ENCODE measurements at regions of chr1 and their contacts with region 1.

Region 1: DNA sequence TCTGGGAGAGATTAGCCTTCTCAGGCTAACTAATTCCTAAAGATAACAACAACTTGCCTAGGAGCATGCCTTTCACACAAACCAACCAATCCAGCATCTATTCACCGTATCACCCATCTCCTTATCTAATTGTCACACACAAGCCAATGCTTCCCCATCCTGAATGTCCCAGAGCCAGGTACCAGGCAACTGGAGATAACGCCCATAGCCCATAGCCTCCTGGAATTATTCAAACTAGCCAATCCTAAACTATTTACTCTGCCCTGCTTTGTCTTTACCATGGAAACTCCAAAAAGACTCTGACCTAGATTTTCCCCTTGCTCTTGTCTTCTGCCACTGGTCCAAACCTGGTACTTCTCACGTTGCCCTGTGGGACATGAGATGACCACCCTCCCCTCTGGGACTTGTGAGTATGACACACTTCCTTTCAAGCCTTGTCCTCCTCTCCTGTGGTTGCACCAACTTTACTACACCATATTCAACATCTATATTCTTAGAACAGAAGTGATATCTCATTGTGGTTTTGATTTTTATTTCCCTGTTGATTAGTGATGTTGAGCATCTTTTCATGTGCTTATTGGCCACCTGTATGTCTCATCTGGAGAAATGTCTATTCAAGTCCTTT is 8.8 kb upstream of the ATG4C start:
- DNase-seq: no peak
- H3K4me3 ChIP-seq: no peak overlapping the region
- H3K4me1 ChIP-seq: no peaks in the 10 kb centered on the region
- H3K27me3 ChIP-seq: no peaks in the 10 kb centered on the region

Region 2: DNA sequence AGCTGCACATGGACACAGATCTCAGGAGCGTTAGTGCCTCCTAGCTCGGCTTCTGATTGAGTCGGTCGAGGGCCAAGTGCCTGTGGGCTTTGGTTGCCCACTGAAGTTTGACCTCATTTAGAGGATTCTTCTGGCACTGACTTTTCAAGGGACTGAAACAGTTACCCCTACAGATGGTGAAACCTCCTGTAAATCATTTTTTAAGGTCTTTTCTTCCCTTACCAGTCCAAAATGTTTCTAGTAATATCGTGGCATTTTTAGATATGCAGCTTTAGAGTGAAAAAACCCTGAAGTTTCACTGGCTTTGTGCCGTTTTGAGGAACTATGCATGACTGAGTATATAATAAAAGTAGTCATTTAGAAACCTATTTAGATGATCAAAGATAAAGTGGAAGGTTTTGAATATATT is 615.1 kb before region 1 on chr1:
- in situ Hi-C with region 1: loop called (anchors 25 kb)
- DNase-seq: no peak
- H3K4me3 ChIP-seq: no peak overlapping the region
- H3K4me1 ChIP-seq: no peaks in the 10 kb centered on the region
- H3K27me3 ChIP-seq: no peaks in the 10 kb centered on the region

Region 3: DNA sequence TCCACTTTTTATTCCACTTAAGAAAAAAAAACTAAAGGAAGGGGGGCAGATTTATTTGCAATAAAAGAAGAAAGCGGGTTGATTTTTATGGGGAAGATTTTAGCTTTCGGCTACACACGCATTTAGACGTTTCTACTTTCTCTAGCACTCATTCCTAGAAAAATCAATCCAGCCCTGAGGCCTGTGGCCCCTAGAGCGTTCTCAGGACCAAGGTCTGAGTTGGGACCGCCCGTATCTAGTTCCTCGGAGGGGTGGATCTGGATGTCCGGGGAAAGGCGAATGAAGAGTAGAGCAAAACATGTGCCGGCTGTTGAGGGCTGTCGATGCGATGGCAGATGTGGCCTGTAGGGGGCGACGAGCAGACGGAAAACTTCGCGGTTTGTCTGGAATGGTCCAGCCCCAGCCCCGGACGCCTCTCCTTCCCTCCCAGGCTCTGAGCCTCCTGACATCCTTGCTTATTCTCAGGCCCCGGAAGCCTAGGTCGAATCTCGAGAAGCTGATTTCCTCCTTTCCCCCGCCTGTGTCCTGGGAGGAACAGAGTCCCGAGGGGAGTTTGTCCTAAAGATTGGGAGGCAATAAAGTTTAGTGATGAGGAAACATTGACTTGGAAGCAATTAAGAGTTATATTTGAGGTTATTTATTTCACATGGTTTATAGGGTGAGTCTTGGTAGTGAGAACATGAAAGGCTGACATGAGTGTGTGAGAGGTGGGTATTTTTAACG is 552.5 kb after region 1 on chr1:
- in situ Hi-C with region 1: no loop called
- DNase-seq: peak; percentile 66 to 90
- H3K4me3 ChIP-seq: no peak overlapping the region
- H3K4me1 ChIP-seq: peaks cover 6% of the 10 kb centered on the region
- H3K27me3 ChIP-seq: no peaks in the 10 kb centered on the region; the same call in 1 of the 2 replicates